BJ (cell line): ENCODE measurements at regions of chr11 and their contacts with region 1.

Region 1: DNA sequence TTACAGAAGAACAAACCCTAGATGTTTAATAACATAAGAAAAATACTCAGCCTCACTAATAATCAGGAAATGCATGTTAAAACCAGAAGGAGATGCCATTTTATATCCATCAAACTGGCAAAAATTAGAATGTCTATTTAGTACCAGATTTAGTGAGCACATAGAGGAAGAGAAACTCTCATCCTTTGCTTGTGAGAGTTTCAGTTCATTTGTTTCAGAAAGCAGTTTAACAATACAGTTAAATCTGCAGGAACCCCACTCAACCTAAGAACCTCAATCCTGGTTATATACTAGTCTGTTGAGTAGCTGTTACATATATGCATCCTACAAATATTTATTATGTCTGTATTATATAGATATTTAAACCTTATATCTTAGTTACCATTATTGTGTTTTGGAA is 172.6 kb downstream of the WNT11 start:
- DNase-seq: no peak
- H3K4me3 ChIP-seq: no peak overlapping the region
- H3K27me3 ChIP-seq: no peaks in the 10 kb centered on the region
- CTCF ChIP-seq: no peak

Region 2: GRCh38 chr11:75241036-75241905 is 792.4 kb before region 1 on chr11:
- CTCF ChIA-PET with region 1: no interaction called
- POLR2A ChIA-PET with region 1: no interaction called
- DNase-seq: peak; percentile 39
- H3K4me3 ChIP-seq: peak overlapping the region; percentile 38
- H3K27me3 ChIP-seq: peaks cover 45% of the 10 kb centered on the region
- CTCF ChIP-seq: peak; percentile 31

Region 3: DNA sequence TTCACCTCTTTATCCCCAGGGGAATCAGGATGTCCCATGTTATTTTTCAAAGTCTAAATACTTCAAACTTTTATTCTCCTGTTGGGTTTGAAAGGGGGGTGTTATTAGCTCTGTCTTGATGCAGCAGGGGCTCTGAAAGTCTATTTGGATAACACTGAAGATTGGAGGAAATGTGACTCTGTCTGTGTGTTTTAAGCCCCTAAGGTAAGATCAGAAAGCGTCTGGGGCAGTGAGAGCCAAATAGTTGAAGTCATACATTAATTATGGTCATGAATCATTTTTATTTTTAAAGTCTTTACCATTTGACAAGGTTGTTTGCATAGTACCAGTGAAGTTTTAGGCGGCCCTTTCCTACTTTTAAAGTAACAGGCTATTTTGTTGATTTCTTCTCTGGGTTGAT is 79.7 kb before region 1 on chr11:
- CTCF ChIA-PET with region 1: no interaction called
- POLR2A ChIA-PET with region 1: interaction called, 10 read pairs
- DNase-seq: no peak
- H3K4me3 ChIP-seq: no peak overlapping the region
- H3K27me3 ChIP-seq: no peaks in the 10 kb centered on the region
- CTCF ChIP-seq: no peak

Region 4: DNA sequence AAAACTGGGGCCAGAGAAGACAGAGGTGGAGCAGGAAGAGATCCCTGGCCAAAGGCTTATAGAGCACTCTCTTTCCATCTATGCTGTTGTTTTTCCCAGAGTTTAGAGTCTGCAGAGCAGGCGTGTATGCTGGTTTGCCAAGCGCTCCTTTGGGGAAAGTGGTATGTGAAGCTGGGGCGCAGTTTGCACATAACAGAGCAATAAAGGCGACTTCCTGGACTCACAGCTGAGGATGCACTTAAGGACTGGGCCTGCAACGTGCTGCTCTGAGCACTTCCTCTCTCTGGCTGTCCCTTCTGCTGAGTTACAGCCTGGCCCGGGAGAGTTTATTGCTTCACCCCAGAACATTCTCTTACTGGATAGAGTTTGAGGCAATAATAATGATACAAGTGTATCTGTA is 305.5 kb after region 1 on chr11:
- CTCF ChIA-PET with region 1: no interaction called
- POLR2A ChIA-PET with region 1: no interaction called
- DNase-seq: no peak
- H3K4me3 ChIP-seq: no peak overlapping the region
- H3K27me3 ChIP-seq: no peaks in the 10 kb centered on the region
- CTCF ChIP-seq: no peak